Natural killer cell (primary cell): ENCODE measurements at regions of chr20 and their contacts with region 1.

Region 1: DNA sequence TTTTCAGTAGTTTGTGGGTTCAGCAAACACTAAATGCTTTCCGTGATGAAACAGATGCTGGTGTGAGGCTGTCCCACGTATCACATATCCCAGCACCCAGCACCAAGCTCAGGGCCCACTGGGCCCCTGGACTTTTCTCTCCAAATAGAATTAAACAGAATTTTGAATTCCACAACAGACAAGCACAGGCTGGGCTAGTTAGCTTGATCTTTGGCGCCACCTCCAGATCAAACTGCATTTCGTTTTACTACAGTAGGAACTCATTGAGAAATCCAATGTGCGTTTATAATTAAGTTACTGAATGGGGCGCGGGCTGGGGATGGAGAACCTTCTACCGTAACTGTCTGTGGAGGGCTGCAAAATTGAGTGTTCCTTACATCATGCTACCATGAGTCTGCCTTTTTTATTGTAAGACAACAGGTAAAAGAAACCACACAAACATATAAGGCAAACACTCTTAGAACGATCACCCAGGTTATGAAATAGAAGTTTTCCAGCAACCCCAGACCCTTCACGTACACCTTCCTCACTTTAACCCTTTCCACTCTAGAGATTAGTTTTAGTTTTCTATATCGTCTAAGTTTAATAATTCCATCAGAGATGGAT is 107.8 kb downstream of the ZFP64 start:
- DNase-seq: peak; percentile 43 to 70
- ATAC-seq: peak in 2 of 3 donors; percentile 73 to 80
- H3K4me3 ChIP-seq: no peak overlapping the region
- H3K4me3 Mint-ChIP-seq: peak overlapping the region; percentile 78
- H3K27ac ChIP-seq: no peak overlapping the region
- H3K27ac Mint-ChIP-seq: peak overlapping the region; percentile 84 to 87
- H3K4me1 ChIP-seq: peaks cover 16% of the 10 kb centered on the region
- H3K4me1 Mint-ChIP-seq: peaks cover 30% of the 10 kb centered on the region in 2 donors
- H3K27me3 ChIP-seq: no peaks in the 10 kb centered on the region
- H3K27me3 Mint-ChIP-seq: no peaks in the 10 kb centered on the region
- CTCF ChIP-seq: peak; percentile 81

Region 2: GRCh38 chr20:50987592-50988210 is 1096.0 kb before region 1 on chr20:
- intact Hi-C with region 1: loop called (anchors 10 kb)
- DNase-seq: peak; percentile 31 to 89
- ATAC-seq: peak; percentile 86 to 100 (median 99)
- H3K4me3 ChIP-seq: no peak overlapping the region
- H3K4me3 Mint-ChIP-seq: no peak overlapping the region
- H3K27ac ChIP-seq: no peak overlapping the region
- H3K27ac Mint-ChIP-seq: no peak overlapping the region
- H3K4me1 ChIP-seq: peaks cover under 1% of the 10 kb centered on the region
- H3K4me1 Mint-ChIP-seq: no peaks in the 10 kb centered on the region
- H3K27me3 ChIP-seq: no peaks in the 10 kb centered on the region
- H3K27me3 Mint-ChIP-seq: peaks cover 18 to 21% of the 10 kb centered on the region in 2 donors
- CTCF ChIP-seq: peak; percentile 84

Region 3: GRCh38 chr20:51639206-51639832 is 444.4 kb before region 1 on chr20:
- intact Hi-C with region 1: loop called (anchors 1 kb)
- DNase-seq: peak; percentile 63 to 71
- ATAC-seq: peak; percentile 63 to 89 (median 87)
- H3K4me3 ChIP-seq: no peak overlapping the region
- H3K4me3 Mint-ChIP-seq: no peak overlapping the region
- H3K27ac ChIP-seq: no peak overlapping the region
- H3K27ac Mint-ChIP-seq: peak overlapping the region in 1 of 2 donors; percentile 55
- H3K4me1 ChIP-seq: peaks cover 6% of the 10 kb centered on the region
- H3K4me1 Mint-ChIP-seq: peaks cover 6 to 8% of the 10 kb centered on the region in 2 donors
- H3K27me3 ChIP-seq: no peaks in the 10 kb centered on the region
- H3K27me3 Mint-ChIP-seq: no peaks in the 10 kb centered on the region
- CTCF ChIP-seq: peak; percentile 90

Region 4: GRCh38 chr20:51695574-51696303 is 388.0 kb before region 1 on chr20:
- intact Hi-C with region 1: loop called (anchors 1 kb)
- DNase-seq: no peak
- ATAC-seq: peak in 1 of 3 donors; percentile 20
- H3K4me3 ChIP-seq: no peak overlapping the region
- H3K4me3 Mint-ChIP-seq: no peak overlapping the region
- H3K27ac ChIP-seq: no peak overlapping the region
- H3K27ac Mint-ChIP-seq: peak overlapping the region in 1 of 2 donors; percentile 8
- H3K4me1 ChIP-seq: peaks cover 6% of the 10 kb centered on the region
- H3K4me1 Mint-ChIP-seq: peaks cover 14 to 27% of the 10 kb centered on the region in 2 donors
- H3K27me3 ChIP-seq: no peaks in the 10 kb centered on the region
- H3K27me3 Mint-ChIP-seq: peaks cover 0 to 6% of the 10 kb centered on the region in 2 donors
- CTCF ChIP-seq: no peak

Region 5: DNA sequence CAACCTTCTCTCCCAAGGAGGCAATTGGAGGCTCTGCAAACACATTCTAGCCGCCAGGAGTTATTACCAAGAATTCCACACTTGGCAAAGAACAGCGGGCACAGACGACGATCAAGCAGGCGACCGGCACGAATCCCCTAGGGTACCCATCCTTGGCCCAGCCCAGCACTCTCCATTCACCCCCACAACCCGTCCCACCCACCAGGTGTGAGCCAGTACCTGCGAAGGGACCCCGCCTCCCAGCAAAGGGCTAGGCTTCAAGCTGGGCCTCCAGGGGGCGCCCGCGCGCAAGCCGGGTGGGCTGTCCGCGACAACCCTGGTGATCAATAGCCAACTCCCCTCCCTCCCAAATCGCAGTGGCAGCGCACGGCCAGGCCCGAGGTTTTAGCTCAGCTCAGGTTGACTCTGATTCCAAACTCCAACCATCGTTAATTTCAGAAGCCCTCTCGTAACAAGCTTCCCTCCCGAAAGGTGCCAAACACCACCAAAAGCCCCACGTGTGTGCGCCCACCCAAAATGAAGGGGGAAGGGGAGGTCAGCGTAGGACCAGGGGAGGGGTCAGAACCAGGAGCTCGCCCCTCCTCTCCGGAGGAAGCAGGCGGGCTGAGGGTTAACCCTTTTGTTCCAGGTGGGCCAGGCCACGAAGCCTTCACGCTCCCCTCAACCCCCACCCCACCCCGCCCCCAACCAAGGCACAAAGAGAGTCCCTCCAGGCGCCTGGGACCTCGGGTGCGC is 283.5 kb before region 1 on chr20:
- intact Hi-C with region 1: loop called (anchors 1 kb)
- DNase-seq: peak; percentile 68 to 72
- ATAC-seq: peak; percentile 52 to 89 (median 69)
- H3K4me3 ChIP-seq: peak overlapping the region; percentile 33
- H3K4me3 Mint-ChIP-seq: peak overlapping the region; percentile 91
- H3K27ac ChIP-seq: no peak overlapping the region
- H3K27ac Mint-ChIP-seq: peak overlapping the region; percentile 29 to 60
- H3K4me1 ChIP-seq: peaks cover 22% of the 10 kb centered on the region
- H3K4me1 Mint-ChIP-seq: peaks cover 12 to 20% of the 10 kb centered on the region in 2 donors
- H3K27me3 ChIP-seq: peaks cover 24% of the 10 kb centered on the region
- H3K27me3 Mint-ChIP-seq: peaks cover 0 to 29% of the 10 kb centered on the region in 2 donors
- CTCF ChIP-seq: peak; percentile 84

Region 6: GRCh38 chr20:52031563-52032303 is 52.0 kb before region 1 on chr20:
- intact Hi-C with region 1: loop called (anchors 5 kb)
- DNase-seq: peak; percentile 33 to 71
- ATAC-seq: peak; percentile 83 to 90 (median 87)
- H3K4me3 ChIP-seq: no peak overlapping the region
- H3K4me3 Mint-ChIP-seq: peak overlapping the region; percentile 82
- H3K27ac ChIP-seq: peak overlapping the region; percentile 63
- H3K27ac Mint-ChIP-seq: peak overlapping the region; percentile 86 to 92
- H3K4me1 ChIP-seq: peaks cover 36% of the 10 kb centered on the region
- H3K4me1 Mint-ChIP-seq: peaks cover 28 to 37% of the 10 kb centered on the region in 2 donors
- H3K27me3 ChIP-seq: no peaks in the 10 kb centered on the region
- H3K27me3 Mint-ChIP-seq: no peaks in the 10 kb centered on the region
- CTCF ChIP-seq: no peak